PC-3 (cell line): ENCODE measurements at regions of chr5 and their contacts with region 1.

Region 1: GRCh38 chr5:173907686-173908371 is 19.7 kb downstream of the CPEB4 start:
- DNase-seq: peak; percentile 46
- ATAC-seq: peak; percentile 59
- H3K4me3 ChIP-seq: no peak overlapping the region
- H3K27ac ChIP-seq: no peak overlapping the region
- H3K4me1 ChIP-seq: peaks cover 17% of the 10 kb centered on the region
- H3K27me3 ChIP-seq: no peaks in the 10 kb centered on the region
- CTCF ChIP-seq: no peak

Region 2: DNA sequence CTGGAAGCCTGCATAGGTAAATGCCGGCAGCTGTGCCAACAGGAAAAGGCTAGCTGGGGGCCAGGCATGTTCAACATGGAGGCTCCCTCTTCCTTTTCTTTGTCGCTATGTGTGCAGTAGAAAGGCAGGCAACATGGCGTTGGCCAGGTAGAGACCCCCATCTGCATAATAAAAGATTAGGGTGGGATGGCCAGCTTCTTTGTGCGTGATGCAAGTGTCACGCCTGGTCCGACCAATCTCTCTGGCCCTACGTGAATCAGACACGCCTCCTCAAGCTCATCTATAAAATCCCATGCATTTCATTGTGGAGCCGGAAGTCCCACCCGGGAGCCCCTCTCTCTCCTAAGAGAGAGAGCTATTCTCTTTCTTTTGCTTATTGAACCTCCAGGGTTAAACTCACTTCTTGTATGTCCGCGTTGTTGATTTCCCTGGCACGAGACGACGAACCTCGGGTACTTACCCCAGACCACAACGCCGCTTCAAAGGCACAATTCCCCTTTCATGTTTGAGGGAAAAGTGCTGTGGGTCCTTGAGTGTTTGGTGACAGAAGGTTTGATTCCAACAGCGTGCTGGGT is 56.1 kb after region 1 on chr5:
- CTCF ChIA-PET with region 1: no interaction called
- POLR2A ChIA-PET with region 1: interaction called, 3 read pairs
- intact Hi-C with region 1: loop called (anchors 2 kb)
- DNase-seq: peak; percentile 44
- ATAC-seq: peak; percentile 45
- H3K4me3 ChIP-seq: peak overlapping the region; percentile 66
- H3K27ac ChIP-seq: peak overlapping the region; percentile 89
- H3K4me1 ChIP-seq: peaks cover 24% of the 10 kb centered on the region
- H3K27me3 ChIP-seq: no peaks in the 10 kb centered on the region
- CTCF ChIP-seq: no peak

Region 3: DNA sequence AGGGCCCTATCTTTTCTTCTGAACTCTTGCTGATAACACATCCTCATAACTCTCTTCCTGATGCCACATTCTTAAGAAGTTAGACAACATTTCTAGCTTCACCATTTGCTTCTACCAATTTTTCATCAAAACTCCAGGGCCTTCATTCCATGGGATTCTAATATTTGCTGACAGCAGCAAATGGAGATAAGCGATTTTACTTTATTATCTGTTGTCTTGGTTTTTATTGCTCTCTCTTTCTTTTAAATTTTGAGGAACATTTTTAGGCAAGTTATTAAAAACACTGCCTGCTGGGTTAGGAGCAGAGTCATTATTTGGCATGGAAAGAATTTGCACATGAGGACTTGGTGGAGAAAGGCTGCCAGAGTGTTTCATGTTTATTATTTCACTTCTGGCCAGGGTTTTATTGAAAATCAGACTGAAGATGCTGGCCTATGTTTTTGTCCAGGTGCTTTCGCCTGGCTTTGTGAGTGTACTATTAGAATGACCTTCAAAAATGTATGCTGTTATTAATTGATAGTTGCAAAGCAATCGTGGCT is 165.4 kb after region 1 on chr5:
- CTCF ChIA-PET with region 1: no interaction called
- POLR2A ChIA-PET with region 1: no interaction called
- intact Hi-C with region 1: no loop called
- DNase-seq: no peak
- ATAC-seq: no peak
- H3K4me3 ChIP-seq: no peak overlapping the region
- H3K27ac ChIP-seq: no peak overlapping the region
- H3K4me1 ChIP-seq: no peaks in the 10 kb centered on the region
- H3K27me3 ChIP-seq: peaks cover 89% of the 10 kb centered on the region
- CTCF ChIP-seq: no peak